T-cell (primary cell): ENCODE measurements at regions of chr19 and their contacts with region 1.

Region 1: DNA sequence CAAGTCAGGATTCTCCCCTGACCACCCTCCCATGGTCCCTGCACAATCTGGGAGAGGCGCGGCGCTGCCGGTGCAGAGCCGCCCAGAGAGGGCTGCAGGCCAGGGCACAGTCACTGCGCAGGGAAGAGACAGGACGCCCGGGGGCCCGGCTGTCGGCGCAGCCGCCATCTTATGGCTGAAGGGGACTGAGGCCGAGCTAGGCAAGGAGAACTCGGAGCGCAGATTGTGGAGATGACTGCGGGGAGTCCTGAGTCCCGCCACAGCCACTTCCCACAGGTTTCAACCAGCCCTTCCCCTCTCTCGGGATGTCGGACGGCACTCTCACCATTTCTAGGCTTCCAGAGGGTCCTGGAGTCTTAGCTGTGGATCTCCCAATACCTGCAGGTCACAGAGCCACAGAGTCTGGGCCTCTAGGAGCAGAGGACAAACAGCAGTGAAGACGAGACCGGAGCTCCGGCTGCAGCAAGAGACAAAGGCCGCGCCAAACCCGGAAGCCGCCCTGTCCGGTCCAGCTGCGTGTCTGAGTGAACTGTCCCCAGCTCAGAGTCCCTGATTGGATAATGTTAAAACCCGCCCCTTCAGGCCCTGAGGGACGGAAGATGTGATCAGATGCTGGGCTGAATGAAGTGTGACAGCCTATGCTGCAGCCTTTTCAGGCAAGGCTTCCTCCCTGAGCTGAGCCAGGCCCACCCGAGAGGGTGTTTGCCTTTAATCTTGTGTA is at the start of gene ZNF708:
- DNase-seq: peak; percentile 50 to 81 (median 62)
- ATAC-seq: peak; percentile 93 to 98 (median 97)
- H3K4me3 ChIP-seq: peak within 1 kb of the TSS; percentile 73 to 98
- H3K4me3 Mint-ChIP-seq: peak within 1 kb of the TSS; percentile 98 to 99 (median 99)
- H3K27ac ChIP-seq: peak within 1 kb of the TSS; percentile 97
- H3K27ac Mint-ChIP-seq: peak within 1 kb of the TSS; percentile 99 to 100
- H3K4me1 ChIP-seq: peaks cover 11 to 21% of the 10 kb centered on the region in 2 experiments
- H3K4me1 Mint-ChIP-seq: peaks cover 43 to 51% (median 44%) of the 10 kb centered on the region in 3 donors
- H3K27me3 ChIP-seq: no peaks in the 10 kb centered on the region
- H3K27me3 Mint-ChIP-seq: no peaks in the 10 kb centered on the region
- total RNA-seq, gene ZNF708: 17.5 to 41.1 (median 33.1) TPM

Region 2: GRCh38 chr19:21396893-21397572 is 68.0 kb after region 1 on chr19 and contains the start of gene ZNF493:
- CTCF ChIA-PET with region 1: no interaction called
- POLR2A ChIA-PET with region 1: interaction called, 4 to 14 read pairs
- DNase-seq: peak; percentile 84 to 96 (median 93)
- ATAC-seq: peak; percentile 99 to 100 (median 100)
- H3K4me3 ChIP-seq: peak within 1 kb of the TSS; percentile 78 to 96
- H3K4me3 Mint-ChIP-seq: peak within 1 kb of the TSS; percentile 94 to 98 (median 98)
- H3K27ac ChIP-seq: peak within 1 kb of the TSS; percentile 47
- H3K27ac Mint-ChIP-seq: peak within 1 kb of the TSS; percentile 89 to 93
- H3K4me1 ChIP-seq: peaks cover 8 to 12% of the 10 kb centered on the region in 2 experiments
- H3K4me1 Mint-ChIP-seq: peaks cover 34 to 38% (median 34%) of the 10 kb centered on the region in 3 donors
- H3K27me3 ChIP-seq: no peaks in the 10 kb centered on the region
- H3K27me3 Mint-ChIP-seq: no peaks in the 10 kb centered on the region
- total RNA-seq, gene ZNF493: 33.5 to 53.8 (median 45.8) TPM

Region 3: GRCh38 chr19:21402303-21402985 is 73.4 kb after region 1 on chr19:
- CTCF ChIA-PET with region 1: no interaction called
- POLR2A ChIA-PET with region 1: interaction called, 4 to 16 read pairs
- DNase-seq: no peak
- ATAC-seq: no peak
- H3K4me3 ChIP-seq: no peak overlapping the region
- H3K4me3 Mint-ChIP-seq: no peak overlapping the region
- H3K27ac ChIP-seq: no peak overlapping the region
- H3K27ac Mint-ChIP-seq: no peak overlapping the region
- H3K4me1 ChIP-seq: peaks cover 6 to 8% of the 10 kb centered on the region in 2 experiments
- H3K4me1 Mint-ChIP-seq: peaks cover 36 to 53% (median 47%) of the 10 kb centered on the region in 3 donors
- H3K27me3 ChIP-seq: no peaks in the 10 kb centered on the region
- H3K27me3 Mint-ChIP-seq: no peaks in the 10 kb centered on the region